Activated CD4-positive, alpha-beta T cell treated with anti-CD3 and anti-CD28 coated beads for 36 hours (primary cell): ENCODE measurements at regions of chr17 and their contacts with region 1.

Region 1: GRCh38 chr17:27654654-27655524 is 23.9 kb downstream of the LGALS9 start:
- DNase-seq: peak; percentile 87
- ATAC-seq: peak; percentile 92
- H3K4me3 Mint-ChIP-seq: no peak overlapping the region
- H3K27ac Mint-ChIP-seq: no peak overlapping the region
- H3K4me1 Mint-ChIP-seq: peaks cover 7% of the 10 kb centered on the region
- H3K27me3 Mint-ChIP-seq: no peaks in the 10 kb centered on the region

Region 2: DNA sequence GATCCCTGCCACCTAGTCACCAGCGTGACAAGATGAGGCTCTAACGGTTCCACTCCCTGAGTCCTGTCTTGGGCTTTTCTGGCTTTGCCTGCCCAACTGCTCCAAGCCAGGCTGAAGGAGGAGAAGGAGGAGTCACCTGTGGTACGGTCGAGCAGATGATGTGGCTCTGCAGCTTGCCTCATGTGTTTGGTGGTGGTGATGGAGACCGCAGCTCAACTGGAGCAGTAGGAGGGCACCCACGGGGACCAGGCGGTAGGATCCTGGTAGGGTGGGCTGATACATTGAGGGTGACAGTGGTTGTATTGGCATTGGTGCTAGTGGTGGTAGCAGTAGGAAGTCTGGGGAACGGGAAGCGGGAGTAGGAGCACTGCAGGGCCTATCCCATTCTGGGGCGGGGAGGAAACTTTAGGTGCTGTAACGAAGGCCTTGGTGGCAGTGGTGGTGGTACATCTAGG is 563.8 kb before region 1 on chr17:
- CTCF ChIA-PET with region 1: no interaction called
- POLR2A ChIA-PET with region 1: no interaction called
- intact Hi-C with region 1: no loop called
- DNase-seq: no peak
- ATAC-seq: no peak
- H3K4me3 Mint-ChIP-seq: no peak overlapping the region
- H3K27ac Mint-ChIP-seq: no peak overlapping the region
- H3K4me1 Mint-ChIP-seq: no peaks in the 10 kb centered on the region
- H3K27me3 Mint-ChIP-seq: no peaks in the 10 kb centered on the region

Region 3: DNA sequence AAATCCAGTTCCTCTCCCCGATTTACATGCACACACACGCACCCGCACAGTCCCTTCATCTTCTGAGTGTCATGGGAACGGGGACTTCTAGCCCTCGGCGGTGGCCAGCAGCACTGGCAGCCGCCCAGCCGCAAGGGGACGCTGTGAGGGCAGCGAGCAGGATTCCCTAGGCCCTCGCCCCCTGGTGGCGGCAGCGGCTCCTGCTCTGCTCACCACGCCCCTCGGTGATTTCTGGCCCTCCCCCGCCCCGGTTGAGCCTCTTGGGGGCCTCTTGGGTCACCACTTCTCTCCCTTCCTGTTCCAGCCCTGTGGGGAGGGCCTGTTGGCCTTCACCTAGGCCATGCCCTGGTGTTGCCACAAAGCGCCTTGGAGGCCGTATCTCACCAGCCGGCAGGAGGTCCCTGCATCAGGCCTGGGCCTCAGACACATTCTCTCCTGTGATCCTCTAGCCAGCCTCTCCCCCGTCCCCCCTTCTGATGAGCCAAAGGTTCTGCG is 273.8 kb before region 1 on chr17:
- CTCF ChIA-PET with region 1: interaction called, 16 read pairs
- POLR2A ChIA-PET with region 1: no interaction called
- intact Hi-C with region 1: loop called in 1 of 2 experiments (anchors 10 kb)
- DNase-seq: peak; percentile 94
- ATAC-seq: peak; percentile 96
- H3K4me3 Mint-ChIP-seq: no peak overlapping the region
- H3K27ac Mint-ChIP-seq: no peak overlapping the region
- H3K4me1 Mint-ChIP-seq: peaks cover 2% of the 10 kb centered on the region
- H3K27me3 Mint-ChIP-seq: peaks cover 23% of the 10 kb centered on the region

Region 4: GRCh38 chr17:27616414-27616813 is 38.5 kb before region 1 on chr17:
- CTCF ChIA-PET with region 1: interaction called, 11 read pairs
- POLR2A ChIA-PET with region 1: no interaction called
- intact Hi-C with region 1: loop called in 1 of 2 experiments (anchors 5 kb)
- DNase-seq: peak; percentile 26
- ATAC-seq: peak; percentile 30
- H3K4me3 Mint-ChIP-seq: peak overlapping the region; percentile 26
- H3K27ac Mint-ChIP-seq: peak overlapping the region; percentile 85
- H3K4me1 Mint-ChIP-seq: peaks cover 51% of the 10 kb centered on the region
- H3K27me3 Mint-ChIP-seq: no peaks in the 10 kb centered on the region

Region 5: GRCh38 chr17:27879987-27880608 is 225.2 kb after region 1 on chr17:
- CTCF ChIA-PET with region 1: interaction called, 8 read pairs
- POLR2A ChIA-PET with region 1: no interaction called
- intact Hi-C with region 1: loop called (anchors 2 to 10 kb)
- DNase-seq: peak; percentile 85
- ATAC-seq: peak; percentile 91
- H3K4me3 Mint-ChIP-seq: no peak overlapping the region
- H3K27ac Mint-ChIP-seq: no peak overlapping the region
- H3K4me1 Mint-ChIP-seq: peaks cover 17% of the 10 kb centered on the region
- H3K27me3 Mint-ChIP-seq: no peaks in the 10 kb centered on the region